H1 (cell line): ENCODE measurements at regions of chr9 and their contacts with region 1.

Region 1: GRCh38 chr9:133813749-133814585 is 75.8 kb upstream of the SARDH start:
- DNase-seq: no peak
- H3K4me3 ChIP-seq: no peak overlapping the region
- H3K27ac ChIP-seq: no peak overlapping the region
- H3K4me1 ChIP-seq: no peaks in the 10 kb centered on the region
- H3K27me3 ChIP-seq: no peaks in the 10 kb centered on the region
- CTCF ChIP-seq: no peak
- EP300 ChIP-seq: no peak
- POLR2A ChIP-seq: no peak
- RAD21 ChIP-seq: no peak

Region 2: GRCh38 chr9:133803028-133803585 is 10.9 kb before region 1 on chr9:
- CTCF ChIA-PET with region 1: interaction called, 13 read pairs
- POLR2A ChIA-PET with region 1: no interaction called
- DNase-seq: no peak
- H3K4me3 ChIP-seq: no peak overlapping the region
- H3K27ac ChIP-seq: no peak overlapping the region
- H3K4me1 ChIP-seq: no peaks in the 10 kb centered on the region; a peak in 1 of 7 replicates
- H3K27me3 ChIP-seq: no peaks in the 10 kb centered on the region
- CTCF ChIP-seq: no peak
- EP300 ChIP-seq: no peak
- POLR2A ChIP-seq: no peak
- RAD21 ChIP-seq: no peak